ENCODE measurements at regions of chrX and their contacts with region 1.

Region 1: DNA sequence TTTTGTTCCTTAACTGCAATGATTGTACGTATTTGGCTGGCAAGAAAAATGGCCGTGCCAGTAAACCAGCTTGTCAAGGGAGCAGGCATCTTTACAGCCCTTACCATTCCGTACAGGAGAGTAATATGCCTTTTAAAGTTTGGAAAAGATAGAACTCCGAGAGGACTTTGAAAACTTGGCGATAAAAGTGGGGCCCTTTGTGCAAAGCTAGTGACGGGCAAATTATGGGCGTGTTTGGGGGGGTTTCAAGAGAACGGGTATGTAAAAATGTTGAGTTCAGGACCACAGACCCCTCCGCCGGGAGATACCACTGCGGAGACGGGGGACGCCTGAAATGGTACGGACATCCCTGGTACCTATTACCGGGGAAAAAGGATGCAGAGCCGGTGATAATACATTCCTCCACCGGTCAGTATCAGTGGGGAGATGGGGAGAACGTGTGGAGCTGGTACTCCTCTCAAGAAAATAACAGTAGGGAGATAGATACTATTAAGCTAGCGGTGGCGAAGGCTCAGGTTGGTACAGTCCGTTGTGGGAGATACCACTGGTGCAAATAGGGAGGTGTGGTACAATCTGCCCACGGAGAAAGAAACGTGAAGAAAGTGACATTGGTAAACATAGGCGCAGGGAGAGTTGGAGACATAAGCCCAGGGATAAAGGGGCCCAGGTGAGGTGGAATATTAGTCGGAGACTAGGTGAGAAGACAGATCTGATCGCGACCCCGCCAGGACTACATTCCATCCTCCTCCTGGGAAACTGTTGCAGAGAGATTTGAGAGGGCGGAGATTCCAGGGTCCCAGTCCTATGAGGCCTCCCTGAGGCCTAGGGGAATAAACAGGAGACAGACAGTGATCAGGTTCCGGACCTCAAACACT is 14.5 kb downstream of the SPACA5 start:
- DNase-seq: peak; percentile 82
- H3K4me3 Mint-ChIP-seq: peak overlapping the region; percentile 84
- H3K27ac Mint-ChIP-seq: peak overlapping the region; percentile 95
- H3K4me1 Mint-ChIP-seq: peaks cover 10% of the 10 kb centered on the region
- H3K27me3 Mint-ChIP-seq: no peaks in the 10 kb centered on the region

Region 2: GRCh38 chrX:47560831-47561652 is 460.2 kb before region 1 on chrX and contains the start of gene ARAF:
- CTCF ChIA-PET with region 1: no interaction called
- intact Hi-C with region 1: loop called (anchors 5 kb)
- DNase-seq: peak; percentile 98
- H3K4me3 Mint-ChIP-seq: peak within 1 kb of the TSS; percentile 81
- H3K27ac Mint-ChIP-seq: peak within 1 kb of the TSS; percentile 96
- H3K4me1 Mint-ChIP-seq: peaks cover 35% of the 10 kb centered on the region
- H3K27me3 Mint-ChIP-seq: no peaks in the 10 kb centered on the region
- total RNA-seq, gene ARAF: 65.9 to 71.5 TPM

Region 3: DNA sequence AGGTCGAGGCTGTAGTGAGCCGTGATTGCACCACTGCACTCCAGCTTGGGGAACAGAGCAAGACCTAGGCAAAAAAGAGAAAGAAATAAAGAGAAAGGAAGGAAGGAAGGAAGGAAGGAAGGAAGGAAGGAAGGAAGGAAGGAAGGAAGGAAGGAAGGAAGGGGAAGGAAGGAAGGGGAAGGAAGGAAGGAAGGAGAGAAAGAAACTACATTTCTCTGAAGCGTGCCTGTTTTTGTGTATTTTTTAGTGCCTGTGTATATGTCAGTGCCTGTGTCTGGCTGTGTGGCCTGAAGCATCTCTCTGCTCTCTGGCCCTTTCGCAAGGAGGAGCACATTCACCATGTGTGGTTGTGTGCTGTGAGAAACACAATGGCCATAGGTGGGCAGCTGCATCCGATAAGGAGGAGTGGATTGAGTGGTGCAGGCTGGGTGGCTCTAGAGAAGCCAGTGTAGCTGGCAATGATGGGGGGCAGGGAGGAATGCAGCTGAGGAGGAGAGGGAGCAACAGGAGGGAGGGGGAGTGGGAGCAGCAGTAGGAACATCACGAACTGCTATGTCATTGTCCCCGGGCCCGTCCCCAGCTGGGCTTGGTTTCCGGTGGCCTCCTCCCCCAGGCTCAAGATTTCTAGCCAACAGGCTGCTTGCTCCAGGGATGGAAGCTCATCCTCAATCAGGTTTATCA is 413.0 kb before region 1 on chrX:
- CTCF ChIA-PET with region 1: no interaction called
- intact Hi-C with region 1: no loop called
- DNase-seq: no peak
- H3K4me3 Mint-ChIP-seq: no peak overlapping the region
- H3K27ac Mint-ChIP-seq: no peak overlapping the region
- H3K4me1 Mint-ChIP-seq: peaks cover 6% of the 10 kb centered on the region
- H3K27me3 Mint-ChIP-seq: no peaks in the 10 kb centered on the region

Region 4: DNA sequence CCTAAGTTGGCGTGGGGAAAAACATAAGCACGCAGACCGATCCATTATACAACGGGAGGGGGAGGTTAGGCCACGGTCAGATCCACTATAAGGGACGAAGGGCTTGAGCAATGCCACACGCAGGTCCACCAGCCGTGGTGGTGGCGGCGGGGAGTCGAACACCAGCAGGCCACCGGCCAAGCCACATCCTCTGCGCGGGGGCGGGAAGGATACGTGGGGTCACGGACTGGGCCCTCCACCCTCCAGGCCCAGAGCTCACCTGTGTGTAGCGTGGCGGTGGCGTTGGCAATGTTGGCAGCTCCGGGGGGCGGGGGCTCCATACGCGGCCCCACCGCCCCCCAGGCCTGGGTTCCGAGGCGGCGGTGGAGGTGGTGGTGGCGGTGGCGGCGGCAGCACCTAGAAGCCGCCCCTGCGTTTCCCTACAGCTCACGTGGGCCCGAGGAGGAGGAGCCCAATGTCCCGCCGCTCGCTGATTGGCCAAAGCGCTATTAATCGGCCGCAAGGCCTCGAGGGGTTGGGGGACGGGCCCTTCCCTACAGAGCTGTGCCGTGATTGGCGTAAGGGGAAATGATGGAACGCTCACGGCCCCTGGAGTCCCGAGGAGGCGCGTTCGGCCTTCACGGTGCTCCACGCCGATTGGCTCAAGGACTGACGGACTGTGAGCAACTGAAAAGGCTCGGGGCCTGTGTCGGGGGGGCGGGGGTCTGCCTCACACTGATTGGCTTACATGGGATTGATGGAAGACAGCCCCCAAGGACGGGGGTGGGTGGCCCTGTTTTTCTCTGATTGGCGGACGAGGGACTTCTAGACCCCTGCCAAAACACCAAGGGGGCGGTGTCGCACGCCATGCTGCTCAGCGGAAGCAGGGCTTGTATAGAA is 370.9 kb before region 1 on chrX and contains the start of gene ELK1:
- CTCF ChIA-PET with region 1: no interaction called
- intact Hi-C with region 1: loop called (anchors 10 kb)
- DNase-seq: peak; percentile 93
- H3K4me3 Mint-ChIP-seq: peak within 1 kb of the TSS; percentile 88
- H3K27ac Mint-ChIP-seq: peak within 1 kb of the TSS; percentile 91
- H3K4me1 Mint-ChIP-seq: peaks cover 37% of the 10 kb centered on the region
- H3K27me3 Mint-ChIP-seq: no peaks in the 10 kb centered on the region
- total RNA-seq, gene ELK1: 58.1 to 58.8 TPM

Region 5: DNA sequence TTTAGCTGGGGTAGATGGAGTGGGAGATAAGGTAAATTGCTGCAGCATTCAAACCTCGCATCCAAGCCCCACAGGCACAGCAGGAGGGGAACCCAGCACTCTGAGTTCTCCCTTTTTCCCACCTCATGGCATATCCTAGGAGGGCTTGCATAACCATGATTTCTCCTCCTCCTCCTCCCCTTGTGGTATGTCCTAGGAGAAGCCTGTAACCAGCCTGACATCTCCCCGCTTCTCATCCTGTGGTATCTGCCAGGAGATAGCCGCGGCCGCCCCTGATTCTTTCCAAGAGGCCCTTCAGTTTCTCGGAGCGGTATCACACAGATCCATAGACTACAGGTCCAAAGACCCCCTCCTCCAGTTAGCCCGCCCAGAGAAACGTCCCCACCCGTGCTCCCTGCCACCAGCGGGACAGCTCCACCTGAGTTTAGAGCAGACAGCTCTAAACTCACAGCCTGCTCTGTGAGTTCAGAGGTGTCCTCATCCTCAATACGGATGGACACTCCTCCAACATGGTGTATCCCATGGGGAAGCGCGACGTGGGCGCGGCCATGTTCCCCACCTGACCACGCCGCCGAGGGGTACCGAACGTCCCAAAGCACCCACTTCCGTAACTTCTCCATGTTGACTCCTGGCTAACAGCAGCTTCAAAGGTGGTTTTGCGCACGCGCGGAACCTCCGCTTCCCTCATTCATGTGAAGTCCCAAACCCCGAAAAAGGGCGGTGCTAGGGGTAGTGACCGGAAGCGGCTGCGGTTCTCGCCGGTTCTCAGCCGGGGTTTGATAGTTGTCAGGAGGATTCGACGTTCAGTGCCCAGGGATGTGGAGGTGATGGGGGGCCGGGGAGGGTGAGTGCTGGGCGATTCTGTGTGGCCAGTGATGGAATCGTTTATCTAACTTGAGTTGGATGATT is 184.8 kb before region 1 on chrX and contains the start of gene ZNF81:
- CTCF ChIA-PET with region 1: interaction called, 11 read pairs
- intact Hi-C with region 1: loop called (anchors 1 kb)
- DNase-seq: peak; percentile 94
- H3K4me3 Mint-ChIP-seq: peak within 1 kb of the TSS; percentile 81
- H3K27ac Mint-ChIP-seq: peak within 1 kb of the TSS; percentile 96
- H3K4me1 Mint-ChIP-seq: peaks cover 18% of the 10 kb centered on the region
- H3K27me3 Mint-ChIP-seq: no peaks in the 10 kb centered on the region
- total RNA-seq, gene ZNF81: 5.8 to 7.2 TPM

Region 6: GRCh38 chrX:47854474-47854873 is 166.8 kb before region 1 on chrX:
- CTCF ChIA-PET with region 1: interaction called, 12 read pairs
- intact Hi-C with region 1: loop called (anchors 1 kb)
- DNase-seq: peak; percentile 47
- H3K4me3 Mint-ChIP-seq: no peak overlapping the region
- H3K27ac Mint-ChIP-seq: no peak overlapping the region
- H3K4me1 Mint-ChIP-seq: peaks cover 4% of the 10 kb centered on the region
- H3K27me3 Mint-ChIP-seq: no peaks in the 10 kb centered on the region

Region 7: GRCh38 chrX:47936224-47936939 is 84.9 kb before region 1 on chrX:
- CTCF ChIA-PET with region 1: no interaction called
- intact Hi-C with region 1: loop called (anchors 1 kb)
- DNase-seq: peak; percentile 55
- H3K4me3 Mint-ChIP-seq: peak overlapping the region; percentile 73
- H3K27ac Mint-ChIP-seq: no peak overlapping the region
- H3K4me1 Mint-ChIP-seq: peaks cover 3% of the 10 kb centered on the region
- H3K27me3 Mint-ChIP-seq: no peaks in the 10 kb centered on the region

Region 8: DNA sequence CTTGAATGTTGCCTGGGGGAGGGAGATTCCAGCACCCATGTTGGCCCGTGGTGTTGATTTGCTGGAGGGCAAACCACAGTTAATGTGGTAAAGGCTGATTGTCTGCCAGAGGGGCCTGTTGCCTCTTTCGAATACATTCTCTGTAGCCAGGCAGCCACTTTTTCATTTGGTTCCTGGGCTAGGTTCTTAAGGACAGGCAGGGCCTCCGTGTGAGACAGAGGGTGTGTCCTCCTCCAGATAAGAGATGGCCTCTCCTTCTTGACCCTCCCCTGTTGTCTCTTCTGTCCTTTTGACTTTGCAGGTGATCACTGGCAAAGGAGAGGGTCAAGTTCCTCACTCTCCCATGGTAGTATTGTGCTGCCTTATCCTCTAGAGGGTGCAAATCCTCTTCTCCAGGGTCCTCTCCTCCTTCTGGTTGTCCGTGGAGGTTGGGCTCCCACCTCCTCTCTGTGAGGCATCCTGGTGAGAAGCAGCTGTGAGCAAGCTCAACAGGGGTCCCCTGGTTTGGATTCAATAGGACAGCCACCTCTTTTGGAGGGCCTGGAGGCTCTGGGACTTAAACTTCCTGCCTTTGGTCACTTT is 62.4 kb before region 1 on chrX:
- CTCF ChIA-PET with region 1: interaction called, 3 read pairs
- intact Hi-C with region 1: loop called (anchors 1 kb)
- DNase-seq: peak; percentile 33
- H3K4me3 Mint-ChIP-seq: no peak overlapping the region
- H3K27ac Mint-ChIP-seq: no peak overlapping the region
- H3K4me1 Mint-ChIP-seq: no peaks in the 10 kb centered on the region
- H3K27me3 Mint-ChIP-seq: no peaks in the 10 kb centered on the region

Measured in activated naive CD4-positive, alpha-beta T cell treated with anti-CD3 and anti-CD28 coated beads for 36 hours (primary cell).